MCF 10A (cell line): ENCODE measurements at regions of chr2 and their contacts with region 1.

Region 1: DNA sequence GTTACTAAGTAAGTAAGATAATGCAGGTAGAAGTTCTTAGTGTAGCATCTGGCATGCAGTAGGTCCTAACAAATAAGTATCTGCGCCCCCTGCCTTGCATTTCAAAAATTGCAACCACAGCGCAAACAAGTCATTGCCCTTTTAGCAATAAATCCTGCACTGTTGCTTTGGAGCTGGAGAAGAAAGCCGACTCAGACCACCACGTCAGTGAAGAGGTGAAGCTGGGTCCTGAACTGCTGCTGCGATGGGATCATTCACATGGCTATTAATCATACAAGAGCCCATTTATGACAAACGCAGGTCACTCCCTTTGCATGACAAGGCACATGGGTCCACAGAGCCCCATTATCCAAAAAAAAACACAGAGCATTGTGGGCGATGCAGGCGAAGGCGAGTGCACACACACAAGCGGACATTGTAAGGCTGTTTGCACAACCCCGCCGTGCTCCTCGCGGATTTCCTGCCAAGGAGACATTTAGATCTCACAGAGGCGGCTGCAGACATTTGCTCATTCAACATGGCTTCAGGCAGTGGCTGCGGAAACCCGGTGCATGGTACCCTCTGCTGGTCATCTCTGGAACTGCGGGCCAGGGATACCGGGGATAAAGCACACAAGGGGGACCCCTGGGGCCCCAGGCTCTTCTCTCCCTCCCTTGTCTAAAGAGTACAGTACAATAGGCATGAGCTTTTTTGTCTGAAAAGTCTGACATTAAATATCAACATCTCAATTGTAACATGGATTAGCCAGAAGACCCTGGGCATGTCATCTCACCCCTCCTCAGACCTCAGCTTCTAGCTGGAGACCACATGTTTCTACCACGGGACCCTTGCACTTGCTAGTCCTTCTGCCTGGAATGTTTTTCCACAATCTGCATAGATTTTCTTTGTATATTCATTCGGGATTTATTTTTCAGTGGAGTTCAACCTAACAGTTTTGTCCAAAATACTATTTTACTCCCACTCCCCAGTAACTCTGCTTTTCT is 56.7 kb downstream of the CYRIA start:
- DNase-seq: peak; percentile 76
- H3K4me3 Mint-ChIP-seq: peak overlapping the region; percentile 73
- H3K27ac Mint-ChIP-seq: no peak overlapping the region
- H3K4me1 Mint-ChIP-seq: no peaks in the 10 kb centered on the region
- H3K27me3 Mint-ChIP-seq: peaks cover 5% of the 10 kb centered on the region
- CTCF ChIP-seq: peak; percentile 95

Region 2: DNA sequence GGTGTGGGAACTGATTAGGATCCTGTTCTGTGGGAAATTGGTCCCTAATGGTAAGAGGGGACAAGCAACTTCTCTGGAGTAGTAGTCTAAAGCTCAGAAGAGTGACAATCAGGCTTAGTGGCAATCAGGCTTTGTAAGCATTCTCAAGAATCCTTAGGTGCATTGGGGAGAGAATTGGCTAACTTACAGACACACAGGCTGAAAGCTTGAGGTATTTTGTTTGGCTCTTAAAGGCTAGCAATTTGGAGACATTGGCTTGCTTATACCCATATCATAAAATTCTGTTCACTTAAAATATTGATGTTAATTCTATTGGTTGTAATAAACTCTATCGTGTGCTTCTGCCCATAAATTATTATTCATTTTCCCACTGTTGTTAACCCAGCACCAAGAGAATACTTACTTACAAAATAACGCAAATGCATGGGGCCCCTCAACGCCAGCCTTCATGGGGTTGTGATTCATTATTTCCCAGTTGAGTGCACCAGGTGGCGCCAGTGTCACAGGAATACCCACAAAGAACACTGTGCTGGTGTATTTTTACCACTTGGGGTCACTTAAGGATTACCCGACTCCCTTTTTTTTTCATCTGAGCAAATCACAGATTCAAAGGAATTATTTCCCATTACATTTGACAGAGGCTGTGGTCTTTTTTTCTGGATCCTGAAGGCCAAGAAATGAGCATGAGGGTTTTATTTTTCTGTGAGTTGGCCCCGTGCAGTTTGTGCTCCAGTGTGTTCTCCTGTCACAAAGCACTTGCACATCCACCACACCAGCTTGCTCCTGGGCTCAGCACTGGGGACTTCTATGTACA is 971.8 kb before region 1 on chr2:
- CTCF ChIA-PET with region 1: interaction called, 14 read pairs
- POLR2A ChIA-PET with region 1: interaction called, 4 read pairs
- intact Hi-C with region 1: no loop called
- DNase-seq: peak; percentile 70
- H3K4me3 Mint-ChIP-seq: no peak overlapping the region
- H3K27ac Mint-ChIP-seq: no peak overlapping the region
- H3K4me1 Mint-ChIP-seq: peaks cover 6% of the 10 kb centered on the region
- H3K27me3 Mint-ChIP-seq: no peaks in the 10 kb centered on the region
- CTCF ChIP-seq: peak; percentile 86

Region 3: DNA sequence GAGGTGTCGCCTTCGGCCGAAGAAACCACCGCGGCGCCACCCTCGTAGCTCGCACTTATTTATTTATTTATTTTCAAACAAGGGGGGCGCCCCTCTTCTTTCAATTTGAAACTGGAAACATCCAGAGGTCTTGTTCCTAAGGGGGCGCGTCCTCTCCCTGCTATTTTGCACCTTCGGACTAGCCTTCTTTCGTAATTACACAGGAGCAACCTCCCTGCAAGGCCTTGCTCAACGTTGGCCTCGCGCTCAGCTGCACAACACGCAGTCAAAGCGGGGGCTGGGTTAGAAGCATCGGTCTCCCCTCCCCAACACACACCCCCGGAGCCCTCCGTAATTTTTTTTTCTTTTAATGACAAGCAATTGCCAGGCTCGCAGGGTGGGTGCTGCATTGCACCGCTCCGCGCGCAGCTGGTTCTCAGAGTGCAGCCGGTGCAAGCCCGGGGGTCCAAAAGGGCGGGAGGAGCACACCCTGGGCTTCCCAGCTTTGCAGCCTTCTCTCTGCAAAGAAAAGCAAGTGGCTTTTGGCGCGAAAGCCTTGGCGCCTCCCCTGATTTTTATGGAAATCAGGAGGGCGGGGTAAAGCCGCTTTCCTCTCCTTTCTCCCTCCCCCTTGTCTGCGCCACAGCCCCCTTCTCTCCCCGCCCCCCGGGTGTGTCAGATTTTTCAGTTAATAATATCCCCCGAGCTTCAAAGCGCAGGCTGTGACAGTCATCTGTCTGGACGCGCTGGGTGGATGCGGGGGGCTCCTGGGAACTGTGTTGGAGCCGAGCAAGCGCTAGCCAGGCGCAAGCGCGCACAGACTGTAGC is 668.9 kb before region 1 on chr2 and contains the start of gene MYCN:
- CTCF ChIA-PET with region 1: interaction called, 24 read pairs
- POLR2A ChIA-PET with region 1: interaction called, 5 read pairs
- intact Hi-C with region 1: loop called (anchors 2 kb)
- DNase-seq: peak; percentile 42
- H3K4me3 Mint-ChIP-seq: no peak within 1 kb of the TSS
- H3K27ac Mint-ChIP-seq: no peak within 1 kb of the TSS
- H3K4me1 Mint-ChIP-seq: no peaks in the 10 kb centered on the region
- H3K27me3 Mint-ChIP-seq: peaks cover 55% of the 10 kb centered on the region
- CTCF ChIP-seq: peak; percentile 85
- total RNA-seq, gene MYCN: not detected in 2 replicates

Region 4: DNA sequence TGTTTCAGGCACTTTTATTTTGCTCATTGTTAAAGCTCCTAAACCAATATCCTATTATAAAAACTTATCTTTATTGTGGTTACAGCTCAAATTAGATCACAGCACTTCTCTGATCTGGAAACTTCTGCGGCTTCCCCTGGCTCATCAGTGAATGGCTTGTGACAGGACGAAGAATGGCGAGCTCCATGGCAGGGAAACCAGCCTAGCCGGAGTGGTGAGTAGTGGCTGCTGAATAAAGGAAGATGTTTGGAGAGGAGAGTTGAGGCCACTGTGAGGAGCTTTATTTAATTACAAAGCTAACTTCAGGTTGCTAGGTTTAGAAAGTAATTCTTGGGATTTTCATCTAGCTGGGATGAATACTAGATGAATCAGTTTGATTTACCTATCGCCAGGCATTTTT is 156.8 kb before region 1 on chr2:
- CTCF ChIA-PET with region 1: no interaction called
- POLR2A ChIA-PET with region 1: no interaction called
- intact Hi-C with region 1: no loop called
- DNase-seq: no peak
- H3K4me3 Mint-ChIP-seq: no peak overlapping the region
- H3K27ac Mint-ChIP-seq: no peak overlapping the region
- H3K4me1 Mint-ChIP-seq: no peaks in the 10 kb centered on the region
- H3K27me3 Mint-ChIP-seq: peaks cover 28% of the 10 kb centered on the region
- CTCF ChIP-seq: no peak

Region 5: DNA sequence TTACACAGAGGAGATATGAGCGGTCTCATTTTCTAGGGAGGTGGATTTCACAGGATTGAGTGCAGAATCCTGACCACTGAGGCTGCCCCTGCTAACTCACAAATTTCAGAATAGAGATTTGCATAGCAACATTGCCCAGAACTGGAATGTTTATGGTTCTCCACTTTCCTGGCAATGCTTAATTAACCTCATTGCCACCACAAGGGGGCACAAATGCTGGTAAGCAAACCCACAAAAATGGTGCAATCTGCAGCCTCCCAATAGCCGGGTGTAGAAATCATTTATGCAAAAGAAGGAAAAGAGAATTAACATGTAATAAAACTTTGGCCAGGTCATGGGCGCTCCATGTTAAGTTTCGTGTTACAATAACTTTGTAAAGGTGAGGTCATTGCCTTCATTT is 55.7 kb before region 1 on chr2:
- CTCF ChIA-PET with region 1: interaction called, 21 read pairs
- POLR2A ChIA-PET with region 1: no interaction called
- intact Hi-C with region 1: loop called (anchors 1 kb)
- DNase-seq: peak; percentile 71
- H3K4me3 Mint-ChIP-seq: no peak overlapping the region
- H3K27ac Mint-ChIP-seq: no peak overlapping the region
- H3K4me1 Mint-ChIP-seq: no peaks in the 10 kb centered on the region
- H3K27me3 Mint-ChIP-seq: peaks cover 8% of the 10 kb centered on the region
- CTCF ChIP-seq: no peak

Region 6: GRCh38 chr2:16625201-16625729 is 16.3 kb after region 1 on chr2:
- CTCF ChIA-PET with region 1: interaction called, 31 read pairs
- POLR2A ChIA-PET with region 1: no interaction called
- intact Hi-C with region 1: no loop called
- DNase-seq: no peak
- H3K4me3 Mint-ChIP-seq: no peak overlapping the region
- H3K27ac Mint-ChIP-seq: no peak overlapping the region
- H3K4me1 Mint-ChIP-seq: peaks cover 6% of the 10 kb centered on the region
- H3K27me3 Mint-ChIP-seq: no peaks in the 10 kb centered on the region
- CTCF ChIP-seq: no peak

Region 7: DNA sequence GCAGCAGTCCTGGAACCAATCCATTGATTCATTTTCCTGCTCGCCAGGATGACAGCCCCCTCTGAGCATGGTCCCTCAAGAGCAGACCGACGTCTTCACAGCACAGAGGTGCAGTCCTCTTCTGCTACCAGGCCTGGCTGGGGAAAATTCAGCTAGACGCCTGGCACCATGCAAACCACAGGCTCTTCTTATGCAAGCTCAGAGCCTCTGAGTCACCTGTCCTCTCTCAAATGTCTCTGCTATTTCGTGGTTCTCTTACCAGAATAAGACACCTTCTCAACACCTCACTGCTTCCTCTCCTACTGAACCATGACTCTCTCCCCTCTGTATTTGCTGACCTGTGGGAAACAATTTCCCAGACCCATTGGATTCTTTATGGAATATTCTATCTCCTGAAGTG is 136.5 kb after region 1 on chr2:
- CTCF ChIA-PET with region 1: interaction called, 13 read pairs
- POLR2A ChIA-PET with region 1: interaction called, 3 read pairs
- intact Hi-C with region 1: no loop called
- DNase-seq: peak; percentile 84
- H3K4me3 Mint-ChIP-seq: no peak overlapping the region
- H3K27ac Mint-ChIP-seq: no peak overlapping the region
- H3K4me1 Mint-ChIP-seq: peaks cover 18% of the 10 kb centered on the region
- H3K27me3 Mint-ChIP-seq: no peaks in the 10 kb centered on the region
- CTCF ChIP-seq: no peak